PC-9 (cell line): ENCODE measurements at regions of chr1 and their contacts with region 1.

Region 1: DNA sequence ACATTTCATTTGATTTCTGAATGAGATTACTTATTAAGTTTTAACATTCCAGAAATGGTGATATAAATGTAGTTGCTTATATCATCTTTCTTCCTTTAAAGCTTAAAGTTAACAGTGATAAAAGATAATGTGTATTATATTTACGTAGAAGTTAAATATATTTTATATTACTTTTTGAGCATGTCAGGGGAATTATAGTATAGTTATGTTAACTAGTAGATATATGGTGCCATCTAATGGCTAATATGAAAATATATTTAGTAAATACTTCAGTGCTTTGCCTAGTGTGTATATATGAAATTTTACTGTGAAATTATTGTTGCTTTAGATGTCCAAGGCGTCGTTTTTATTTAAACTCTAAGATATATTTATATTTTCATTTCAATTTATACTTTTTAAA is 51.5 kb downstream of the SYT14 start:
- DNase-seq: no peak
- H3K4me3 ChIP-seq: no peak overlapping the region
- H3K27ac ChIP-seq: peak overlapping the region; percentile 63
- H3K4me1 ChIP-seq: peaks cover 15% of the 10 kb centered on the region
- H3K27me3 ChIP-seq: no peaks in the 10 kb centered on the region
- CTCF ChIP-seq: peak; percentile 69; the same call in 1 of the 2 replicates

Region 2: GRCh38 chr1:209884665-209885117 is 104.8 kb before region 1 on chr1:
- CTCF ChIA-PET with region 1: no interaction called
- POLR2A ChIA-PET with region 1: no interaction called
- intact Hi-C with region 1: loop called (anchors 1 kb)
- DNase-seq: peak; percentile 85 to 87
- H3K4me3 ChIP-seq: no peak overlapping the region
- H3K27ac ChIP-seq: peak overlapping the region; percentile 68
- H3K4me1 ChIP-seq: peaks cover 20% of the 10 kb centered on the region
- H3K27me3 ChIP-seq: no peaks in the 10 kb centered on the region
- CTCF ChIP-seq: no peak